ENCODE measurements at regions of chr9 and their contacts with region 1.

Region 1: GRCh38 chr9:134378901-134379338 is 52.7 kb downstream of the RXRA start:
- DNase-seq: no peak

Region 2: GRCh38 chr9:134344068-134344799 is 34.7 kb before region 1 on chr9:
- intact Hi-C with region 1: loop called (anchors 5 kb)
- DNase-seq: peak; percentile 84

Region 3: GRCh38 chr9:134413890-134414731 is 35.2 kb after region 1 on chr9:
- intact Hi-C with region 1: loop called (anchors 5 kb)
- DNase-seq: peak; percentile 91

Region 4: DNA sequence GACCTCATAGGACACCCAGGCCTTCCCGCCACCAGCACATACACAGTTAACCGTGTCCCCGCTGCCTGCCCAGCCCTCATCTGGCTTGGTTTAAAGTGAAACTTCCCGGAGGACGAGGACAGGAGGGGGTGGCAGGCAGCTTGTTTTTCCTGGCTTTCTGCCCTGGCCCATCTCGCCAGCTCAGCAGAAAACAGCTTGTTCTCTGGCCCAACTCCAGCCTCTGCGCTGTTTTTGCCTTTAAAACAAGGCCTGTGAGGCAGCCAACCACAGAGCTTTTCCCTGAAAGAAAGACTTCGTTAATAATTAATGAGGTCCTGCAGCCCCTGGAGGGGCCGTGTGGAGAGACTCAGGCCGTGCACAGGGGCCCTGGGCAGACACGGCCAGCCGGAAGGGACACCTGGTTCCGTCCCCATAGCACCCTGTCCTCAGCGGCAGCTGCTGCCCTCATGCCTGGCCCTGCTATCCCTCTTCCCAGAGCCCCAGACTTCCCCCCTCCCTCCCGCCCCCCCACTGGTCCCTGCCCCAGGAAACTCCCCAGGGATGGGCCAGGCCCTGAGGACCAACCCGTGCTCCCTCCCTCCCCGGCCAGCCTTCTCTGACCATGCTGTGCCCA is 56.1 kb after region 1 on chr9:
- intact Hi-C with region 1: loop called (anchors 5 kb)
- DNase-seq: peak; percentile 94

Measured in cardiac septum (tissue), 1 donor.